ENCODE measurements at regions of chr13 and their contacts with region 1.

Region 1: DNA sequence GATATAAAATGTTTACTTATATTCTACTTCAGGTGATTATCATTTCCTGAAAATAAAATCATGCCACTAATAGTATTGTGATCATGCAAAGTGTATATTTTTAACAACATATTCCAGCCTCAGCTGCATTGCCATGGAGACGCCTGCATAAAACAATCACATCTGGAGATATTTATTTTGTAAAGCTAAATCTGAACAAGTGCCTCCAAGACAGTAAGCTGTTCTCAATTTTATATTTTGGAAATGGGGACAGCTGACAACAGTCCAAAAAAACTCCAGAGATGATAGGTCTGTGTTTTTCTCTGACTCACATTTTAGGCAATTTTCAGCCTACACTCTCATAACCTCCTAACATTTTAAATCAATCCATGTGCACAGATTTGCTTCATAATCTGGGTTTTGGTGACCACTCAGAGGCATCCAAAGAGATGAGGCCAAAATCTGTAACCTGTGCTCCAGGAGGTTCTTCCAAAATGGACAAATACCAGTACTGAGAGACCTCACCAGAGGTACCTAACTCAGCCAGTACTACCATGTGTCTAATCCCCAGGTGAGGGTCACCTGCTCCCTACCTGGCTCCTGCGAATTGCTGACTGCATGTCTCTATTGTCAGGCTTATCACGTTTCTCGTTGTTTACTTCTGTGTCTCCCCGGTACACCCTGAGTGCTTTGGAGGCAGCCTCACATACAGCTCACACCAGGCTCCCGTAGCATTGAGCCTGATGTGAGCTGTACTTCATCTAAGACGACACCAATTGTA is 62.7 kb downstream of the COL4A1 start:
- DNase-seq: no peak
- ATAC-seq: peak; percentile 54

Region 2: DNA sequence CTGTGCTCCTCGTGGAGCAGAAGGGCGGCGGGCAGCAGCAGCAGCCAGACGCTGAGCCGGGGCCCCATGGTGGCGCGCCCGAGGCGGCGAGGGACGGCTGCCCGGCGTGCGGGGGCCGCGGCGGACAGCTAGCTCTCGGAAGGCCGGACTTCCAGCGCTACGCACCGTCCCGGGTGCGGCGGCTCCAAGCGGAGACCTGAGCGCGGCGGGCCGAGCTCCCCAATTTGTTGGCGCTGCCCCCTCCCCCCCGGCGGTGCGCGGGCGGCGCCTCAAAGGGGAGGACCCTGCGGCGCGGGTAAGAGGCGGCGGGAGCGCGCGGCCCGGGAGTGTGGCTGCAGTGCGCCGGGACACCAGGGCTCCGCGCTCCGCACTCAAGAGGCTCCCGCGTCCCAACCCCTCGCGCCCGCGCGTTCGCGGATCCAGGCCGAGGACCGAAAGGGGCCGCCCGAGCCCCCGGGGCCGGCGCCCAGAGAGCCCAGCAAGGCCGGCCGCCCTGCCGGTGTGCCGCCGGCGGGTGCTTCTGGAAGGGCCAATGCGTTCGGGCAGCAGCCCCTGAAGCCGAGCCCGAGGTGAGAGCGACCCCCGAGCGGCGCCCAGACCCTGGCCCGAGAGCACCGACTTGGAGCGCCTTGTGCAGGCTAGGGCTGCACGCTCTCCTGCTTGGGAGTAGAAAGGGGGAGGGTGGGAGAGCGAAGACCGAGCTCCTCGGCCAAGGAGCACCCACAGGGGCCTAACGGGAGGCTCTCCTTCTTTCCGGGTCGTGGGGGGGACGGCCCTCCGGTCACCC is 62.9 kb after region 1 on chr13 and contains the starts of genes COL4A1 and COL4A2:
- intact Hi-C with region 1: loop called (anchors 10 kb)
- DNase-seq: peak; percentile 90
- ATAC-seq: peak; percentile 81
- total RNA-seq, gene COL4A1: 423 TPM
- total RNA-seq, gene COL4A2: 417 TPM